Vagina (tissue), 2 donors: ENCODE measurements at regions of chr2 and their contacts with region 1.

Region 1: GRCh38 chr2:27890146-27890923 is at the starts of genes BABAM2 and RBKS:
- DNase-seq: peak in 1 of 2 donors; percentile 92
- H3K4me3 ChIP-seq: peak within 1 kb of the TSS; percentile 59 to 91
- H3K27ac ChIP-seq: peak within 1 kb of the TSS; percentile 84
- H3K4me1 ChIP-seq: peaks cover 19% of the 10 kb centered on the region
- H3K27me3 ChIP-seq: no peaks in the 10 kb centered on the region
- CTCF ChIP-seq: peak in 1 of 3 experiments; percentile 5
- POLR2A ChIP-seq: peak in 1 of 2 donors; percentile 75
- total RNA-seq, gene BABAM2: 41.0 TPM
- total RNA-seq, gene RBKS: 2.2 TPM

Region 2: DNA sequence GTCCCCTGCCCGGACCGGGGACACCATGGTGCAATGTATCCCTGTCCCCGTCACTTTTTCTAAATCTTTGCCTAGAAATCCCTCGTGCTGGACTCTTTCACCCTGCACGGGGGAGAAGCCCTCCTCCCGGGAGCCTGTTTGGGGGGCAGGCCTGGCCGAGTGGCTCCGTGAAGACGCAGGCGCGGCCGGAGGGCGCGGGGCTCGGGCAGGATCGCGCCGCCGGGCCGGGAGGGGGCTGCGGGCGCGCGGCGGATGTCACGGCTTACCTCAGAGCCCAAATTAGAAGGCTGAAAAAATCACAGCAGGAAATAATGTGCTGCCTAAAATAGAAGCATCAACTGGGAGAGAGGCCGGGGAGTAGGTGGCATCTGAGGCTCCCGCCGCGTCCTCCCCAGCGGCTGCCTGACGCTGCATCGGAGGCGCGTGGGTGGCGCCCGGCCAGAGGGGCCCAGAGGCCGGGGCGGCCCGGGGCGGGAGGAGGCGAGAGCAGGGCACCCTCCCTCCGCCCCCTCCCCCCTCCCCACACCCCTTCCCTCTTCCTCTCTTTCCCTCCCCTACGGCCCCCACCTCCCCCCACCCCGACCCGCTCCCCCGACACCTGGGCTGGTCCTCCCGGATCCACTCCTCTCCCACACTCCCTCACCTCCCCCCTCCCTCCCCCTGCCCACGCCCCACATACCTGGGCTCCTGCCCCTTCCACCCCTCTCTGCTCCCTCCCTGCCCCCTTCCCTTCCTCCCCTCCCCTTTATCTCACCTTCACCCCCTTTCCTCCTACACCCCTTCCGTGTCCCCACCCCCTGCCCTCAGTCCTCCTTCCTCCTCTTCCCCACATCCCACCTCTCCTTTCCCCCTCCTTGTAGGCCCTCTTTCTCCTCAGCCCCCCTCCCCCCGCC is 174.8 kb before region 1 on chr2:
- intact Hi-C with region 1: loop called (anchors 10 kb)
- DNase-seq: no peak
- H3K4me3 ChIP-seq: peak overlapping the region; percentile 43 to 55
- H3K27ac ChIP-seq: peak overlapping the region; percentile 77
- H3K4me1 ChIP-seq: peaks cover 22% of the 10 kb centered on the region
- H3K27me3 ChIP-seq: no peaks in the 10 kb centered on the region
- CTCF ChIP-seq: no peak
- POLR2A ChIP-seq: no peak

Region 3: GRCh38 chr2:27823569-27823968 is 66.8 kb before region 1 on chr2:
- intact Hi-C with region 1: no loop called
- DNase-seq: no peak
- H3K4me3 ChIP-seq: no peak overlapping the region
- H3K27ac ChIP-seq: no peak overlapping the region
- H3K4me1 ChIP-seq: no peaks in the 10 kb centered on the region
- H3K27me3 ChIP-seq: no peaks in the 10 kb centered on the region
- CTCF ChIP-seq: no peak
- POLR2A ChIP-seq: no peak

Region 4: GRCh38 chr2:28269019-28269784 is 378.9 kb after region 1 on chr2:
- intact Hi-C with region 1: no loop called
- DNase-seq: no peak
- H3K4me3 ChIP-seq: no peak overlapping the region
- H3K27ac ChIP-seq: peak overlapping the region; percentile 42
- H3K4me1 ChIP-seq: peaks cover 49% of the 10 kb centered on the region
- H3K27me3 ChIP-seq: no peaks in the 10 kb centered on the region
- CTCF ChIP-seq: no peak
- POLR2A ChIP-seq: no peak